ENCODE measurements at regions of chr14 and their contacts with region 1.

Region 1: GRCh38 chr14:103121846-103122584 is 1.2 kb upstream of the TNFAIP2 start:
- DNase-seq: peak in 1 of 2 donors; percentile 78
- ATAC-seq: peak; percentile 35 to 37
- H3K4me3 ChIP-seq: peak overlapping the region; percentile 61 to 74 (median 66)
- H3K27ac ChIP-seq: peak overlapping the region; percentile 74 to 87 (median 86)
- H3K4me1 ChIP-seq: peaks cover 41 to 54% of the 10 kb centered on the region in 2 donors
- H3K27me3 ChIP-seq: no peaks in the 10 kb centered on the region
- CTCF ChIP-seq: no peak
- POLR2A ChIP-seq: peak in 1 of 2 donors; percentile 7

Region 2: GRCh38 chr14:103078093-103078749 is 43.8 kb before region 1 on chr14:
- in situ Hi-C with region 1: no loop called
- intact Hi-C with region 1: loop called (anchors 5 kb)
- DNase-seq: peak; percentile 47 to 70
- ATAC-seq: peak; percentile 54 to 59
- H3K4me3 ChIP-seq: no peak overlapping the region
- H3K27ac ChIP-seq: no peak overlapping the region
- H3K4me1 ChIP-seq: peaks cover 4 to 17% of the 10 kb centered on the region in 2 donors
- H3K27me3 ChIP-seq: peaks cover 0 to 5% (median 2%) of the 10 kb centered on the region in 3 donors
- CTCF ChIP-seq: peak; percentile 52 to 78 (median 62)
- POLR2A ChIP-seq: no peak

Region 3: DNA sequence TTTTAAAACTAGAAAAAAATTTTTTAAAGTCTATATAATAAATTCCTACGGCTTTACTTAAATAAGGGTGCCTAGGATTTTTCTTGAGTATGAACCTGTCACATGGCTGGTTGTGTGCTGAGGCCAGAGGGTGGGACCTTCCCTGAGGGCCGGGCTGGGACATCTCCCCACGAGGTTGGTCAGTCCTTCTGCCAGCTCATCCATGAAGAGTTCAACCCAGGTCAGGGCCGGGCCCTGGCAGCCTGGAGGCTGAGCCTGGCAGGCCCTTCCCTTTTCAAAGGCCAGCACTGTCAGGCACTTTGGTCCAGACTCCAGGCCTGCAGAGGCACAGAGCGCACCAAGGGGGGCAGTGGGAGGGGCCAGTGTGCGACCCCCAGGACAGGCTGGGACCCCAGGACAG is 33.0 kb after region 1 on chr14:
- in situ Hi-C with region 1: no loop called
- intact Hi-C with region 1: loop called (anchors 2 kb)
- DNase-seq: peak; percentile 89 to 95
- ATAC-seq: peak; percentile 98 to 99
- H3K4me3 ChIP-seq: no peak overlapping the region
- H3K27ac ChIP-seq: peak overlapping the region; percentile 32 to 58 (median 41)
- H3K4me1 ChIP-seq: peaks cover 5 to 22% of the 10 kb centered on the region in 2 donors
- H3K27me3 ChIP-seq: no peaks in the 10 kb centered on the region
- CTCF ChIP-seq: no peak
- POLR2A ChIP-seq: no peak

Region 4: GRCh38 chr14:103333754-103334643 is 212.0 kb after region 1 on chr14 and contains the start of gene EIF5:
- in situ Hi-C with region 1: no loop called
- intact Hi-C with region 1: no loop called
- DNase-seq: peak; percentile 99
- ATAC-seq: peak; percentile 90 to 91
- H3K4me3 ChIP-seq: peak within 1 kb of the TSS; percentile 80 to 100 (median 86)
- H3K27ac ChIP-seq: peak within 1 kb of the TSS; percentile 92 to 100 (median 98)
- H3K4me1 ChIP-seq: peaks cover 25 to 35% of the 10 kb centered on the region in 2 donors
- H3K27me3 ChIP-seq: no peaks in the 10 kb centered on the region
- CTCF ChIP-seq: peak; percentile 26 to 72 (median 59)
- POLR2A ChIP-seq: peak; percentile 98 to 100
- total RNA-seq, gene EIF5: 313 to 538 (median 374) TPM

Region 5: GRCh38 chr14:103401223-103402214 is 279.5 kb after region 1 on chr14:
- in situ Hi-C with region 1: loop called in 1 of 4 experiments (anchors 10 kb)
- intact Hi-C with region 1: no loop called
- DNase-seq: peak in 1 of 2 donors; percentile 32
- ATAC-seq: peak; percentile 57 to 64
- H3K4me3 ChIP-seq: no peak overlapping the region
- H3K27ac ChIP-seq: peak overlapping the region; percentile 83 to 88 (median 86)
- H3K4me1 ChIP-seq: peaks cover 84% of the 10 kb centered on the region in 2 donors
- H3K27me3 ChIP-seq: no peaks in the 10 kb centered on the region
- CTCF ChIP-seq: no peak
- POLR2A ChIP-seq: no peak

Region 6: GRCh38 chr14:103463149-103463548 is 341.1 kb after region 1 on chr14:
- in situ Hi-C with region 1: no loop called
- intact Hi-C with region 1: no loop called
- DNase-seq: no peak
- ATAC-seq: no peak
- H3K4me3 ChIP-seq: no peak overlapping the region
- H3K27ac ChIP-seq: no peak overlapping the region
- H3K4me1 ChIP-seq: no peaks in the 10 kb centered on the region
- H3K27me3 ChIP-seq: no peaks in the 10 kb centered on the region
- CTCF ChIP-seq: no peak
- POLR2A ChIP-seq: no peak

Region 7: GRCh38 chr14:103746701-103747100 is 624.7 kb after region 1 on chr14:
- in situ Hi-C with region 1: no loop called
- intact Hi-C with region 1: no loop called
- DNase-seq: no peak
- ATAC-seq: no peak
- H3K4me3 ChIP-seq: no peak overlapping the region
- H3K27ac ChIP-seq: no peak overlapping the region
- H3K4me1 ChIP-seq: no peaks in the 10 kb centered on the region
- H3K27me3 ChIP-seq: no peaks in the 10 kb centered on the region
- CTCF ChIP-seq: no peak
- POLR2A ChIP-seq: no peak

Region 8: DNA sequence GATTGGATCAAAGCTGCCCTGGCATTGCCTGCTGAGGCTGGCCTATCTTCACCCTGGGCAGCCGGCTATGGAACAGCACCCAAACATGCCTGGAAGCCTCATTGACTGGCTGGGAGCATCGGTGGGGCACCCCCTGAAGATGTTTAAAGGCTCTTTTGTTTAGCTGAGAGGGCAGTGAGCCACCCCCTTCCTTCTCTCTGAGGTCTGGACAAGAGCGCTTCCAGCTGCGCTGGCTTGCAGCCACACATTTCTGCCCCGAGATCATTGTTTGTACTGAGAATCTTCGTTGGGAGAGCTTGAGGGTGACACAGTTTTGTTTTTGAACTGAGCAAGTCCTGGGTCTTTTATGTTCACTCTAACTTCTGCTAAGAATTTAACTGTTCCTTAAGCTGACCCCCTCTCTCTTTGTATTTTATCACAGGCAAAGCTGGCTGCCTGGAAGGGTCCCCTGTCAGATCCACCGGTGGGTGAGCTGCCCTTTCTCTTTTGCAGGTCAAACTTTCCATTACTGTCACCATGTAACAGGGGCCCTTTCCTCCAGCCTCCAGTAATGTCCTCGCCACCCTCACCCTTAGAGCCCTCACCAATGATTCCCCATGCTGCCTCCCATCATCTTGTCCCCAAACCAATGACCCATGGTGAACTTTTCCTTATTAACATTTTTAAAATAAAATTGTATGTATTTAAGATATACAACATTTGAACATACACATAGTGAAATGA is 1228.6 kb after region 1 on chr14:
- in situ Hi-C with region 1: no loop called
- intact Hi-C with region 1: no loop called
- DNase-seq: peak in 1 of 2 donors; percentile 6
- ATAC-seq: no peak
- H3K4me3 ChIP-seq: no peak overlapping the region
- H3K27ac ChIP-seq: no peak overlapping the region
- H3K4me1 ChIP-seq: no peaks in the 10 kb centered on the region
- H3K27me3 ChIP-seq: peaks cover 0 to 3% (median 0%) of the 10 kb centered on the region in 3 donors
- CTCF ChIP-seq: no peak
- POLR2A ChIP-seq: no peak

Measured in gastrocnemius medialis (tissue), 4 donors.